IMR-90 (cell line): ENCODE measurements at regions of chr7 and their contacts with region 1.

Region 1: DNA sequence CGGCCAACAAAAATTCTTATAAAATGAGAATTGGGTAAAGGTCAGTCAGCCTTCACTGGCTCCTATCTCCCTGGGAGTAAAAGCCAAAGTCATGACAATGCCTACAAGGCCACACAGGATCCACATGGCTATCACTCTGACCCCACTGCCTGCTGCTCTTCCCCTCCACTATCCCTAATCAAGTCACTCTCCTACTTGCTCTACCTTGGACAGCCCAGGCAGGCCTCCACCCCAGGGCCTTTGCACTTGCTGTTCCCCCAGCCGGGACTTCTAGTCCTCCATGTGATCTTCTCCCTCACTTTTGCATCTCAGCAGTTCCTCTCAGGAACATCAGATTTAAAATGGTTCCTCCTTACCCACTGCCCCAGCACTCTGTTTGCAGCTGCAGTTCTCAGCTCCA is 50.6 kb downstream of the PRR15 start:
- DNase-seq: no peak
- ATAC-seq: no peak
- H3K4me3 ChIP-seq: no peak overlapping the region
- H3K27ac ChIP-seq: no peak overlapping the region
- H3K4me1 ChIP-seq: no peaks in the 10 kb centered on the region
- H3K27me3 ChIP-seq: no peaks in the 10 kb centered on the region
- CTCF ChIP-seq: no peak
- POLR2A ChIP-seq: no peak
- RAD21 ChIP-seq: no peak

Region 2: DNA sequence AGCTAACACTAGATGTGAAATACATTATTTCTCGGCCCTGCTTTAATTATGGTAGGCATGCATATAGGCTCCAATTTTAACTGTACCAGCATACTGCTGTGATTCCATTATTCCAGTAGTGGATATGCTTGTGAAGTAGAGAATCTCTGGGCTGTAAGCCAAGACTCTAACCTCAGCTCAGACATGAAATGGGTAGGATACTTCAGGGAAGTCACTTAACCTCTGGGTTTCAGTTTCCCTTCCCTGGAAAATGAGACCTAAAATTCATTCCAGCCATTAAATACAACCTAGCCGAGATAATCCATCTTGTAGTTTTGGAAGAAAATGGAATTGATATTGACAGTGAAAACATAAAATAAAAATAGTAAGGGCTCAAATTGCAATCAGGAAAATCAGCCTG is 596.5 kb before region 1 on chr7:
- CTCF ChIA-PET with region 1: no interaction called
- POLR2A ChIA-PET with region 1: no interaction called
- dilution Hi-C with region 1: no loop called
- in situ Hi-C with region 1: no loop called
- intact Hi-C with region 1: no loop called
- DNase-seq: peak; percentile 6
- ATAC-seq: no peak
- H3K4me3 ChIP-seq: no peak overlapping the region
- H3K27ac ChIP-seq: no peak overlapping the region
- H3K4me1 ChIP-seq: no peaks in the 10 kb centered on the region
- H3K27me3 ChIP-seq: no peaks in the 10 kb centered on the region; the same call in 1 of the 2 replicates
- CTCF ChIP-seq: no peak
- POLR2A ChIP-seq: no peak
- RAD21 ChIP-seq: no peak

Region 3: GRCh38 chr7:29639881-29640595 is 25.8 kb after region 1 on chr7:
- CTCF ChIA-PET with region 1: no interaction called
- POLR2A ChIA-PET with region 1: interaction called, 10 read pairs
- dilution Hi-C with region 1: no loop called
- in situ Hi-C with region 1: no loop called
- intact Hi-C with region 1: no loop called
- DNase-seq: no peak
- ATAC-seq: no peak
- H3K4me3 ChIP-seq: no peak overlapping the region
- H3K27ac ChIP-seq: no peak overlapping the region
- H3K4me1 ChIP-seq: no peaks in the 10 kb centered on the region
- H3K27me3 ChIP-seq: no peaks in the 10 kb centered on the region
- CTCF ChIP-seq: no peak
- POLR2A ChIP-seq: no peak
- RAD21 ChIP-seq: no peak

Region 4: DNA sequence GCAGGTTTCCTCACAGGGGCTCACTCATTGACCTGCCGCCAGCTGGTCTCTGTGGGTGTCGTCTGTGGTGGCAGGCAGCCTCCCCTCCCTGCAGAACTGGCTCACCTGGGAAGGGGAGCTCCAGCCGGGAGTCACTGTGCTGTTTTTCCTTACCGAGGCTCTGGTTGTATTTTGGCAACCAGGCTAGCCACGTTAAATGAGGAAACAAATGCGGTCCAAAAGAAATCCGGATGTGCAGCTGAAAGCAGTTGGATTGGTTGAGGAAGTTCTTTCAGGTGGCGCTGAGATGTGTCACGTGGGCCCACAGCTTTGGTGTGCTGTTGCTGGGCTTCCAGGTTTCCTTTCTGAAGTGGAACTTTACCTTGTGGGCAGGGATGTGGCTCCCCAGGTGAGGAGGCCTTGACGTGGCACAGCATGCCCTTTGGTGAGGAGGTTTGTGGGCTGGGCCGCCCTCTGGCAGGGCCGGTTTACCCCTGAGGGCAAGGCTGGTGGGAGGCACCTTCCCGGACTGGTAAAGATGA is 534.8 kb after region 1 on chr7:
- CTCF ChIA-PET with region 1: no interaction called
- POLR2A ChIA-PET with region 1: no interaction called
- dilution Hi-C with region 1: no loop called
- in situ Hi-C with region 1: no loop called
- intact Hi-C with region 1: no loop called
- DNase-seq: no peak
- ATAC-seq: no peak
- H3K4me3 ChIP-seq: no peak overlapping the region
- H3K27ac ChIP-seq: no peak overlapping the region
- H3K4me1 ChIP-seq: peaks cover 3% of the 10 kb centered on the region; the same call in 1 of the 2 replicates
- H3K27me3 ChIP-seq: no peaks in the 10 kb centered on the region
- CTCF ChIP-seq: no peak
- POLR2A ChIP-seq: no peak
- RAD21 ChIP-seq: no peak